Activated CD8-positive, alpha-beta T cell treated with anti-CD3 and anti-CD28 coated beads, Interleukin-2, amount 10 ng/mL, durations not matched to agents 7 days and 5 days (primary cell): ENCODE measurements at regions of chr3 and their contacts with region 1.

Region 1: GRCh38 chr3:195458316-195458717 is 15.5 kb upstream of the ACAP2 start:
- DNase-seq: no peak
- ATAC-seq: peak; percentile 95
- H3K4me3 Mint-ChIP-seq: peak overlapping the region; percentile 33
- H3K27ac Mint-ChIP-seq: peak overlapping the region; percentile 86
- H3K4me1 Mint-ChIP-seq: peaks cover 20% of the 10 kb centered on the region
- H3K27me3 Mint-ChIP-seq: no peaks in the 10 kb centered on the region

Region 2: DNA sequence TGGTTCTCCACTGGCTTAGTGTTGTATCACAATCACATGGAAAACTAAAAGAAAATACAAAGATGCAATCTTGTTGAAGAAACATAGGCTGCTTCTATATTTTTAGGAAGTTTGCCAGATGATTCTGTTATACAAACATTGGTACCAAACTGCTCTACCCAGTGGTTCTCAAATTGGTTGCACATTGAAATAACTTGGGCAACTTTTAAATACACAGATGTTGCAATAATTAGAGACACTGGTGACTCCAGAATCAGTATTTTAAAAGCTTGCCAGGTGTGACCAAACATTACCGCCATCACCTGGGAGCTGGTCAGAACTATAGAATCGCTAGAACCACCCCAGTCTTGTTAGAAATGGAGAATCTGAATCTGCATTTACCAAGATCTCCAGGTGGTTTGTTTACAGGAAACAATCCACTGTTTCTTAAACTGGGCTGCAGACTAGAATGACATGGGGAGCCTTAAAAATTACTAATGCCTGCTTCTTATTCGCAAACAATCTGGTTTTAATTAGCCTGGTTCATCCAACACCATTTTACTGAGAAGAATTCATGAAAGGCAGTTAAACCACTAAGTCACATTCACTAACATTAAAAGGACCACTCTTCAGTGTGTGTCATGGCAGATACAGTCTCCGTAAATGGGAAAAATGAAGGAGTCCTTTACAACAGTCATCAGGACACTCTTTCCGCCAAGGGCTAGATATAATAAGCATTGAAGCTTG is 92.0 kb before region 1 on chr3:
- CTCF ChIA-PET with region 1: no interaction called
- POLR2A ChIA-PET with region 1: no interaction called
- DNase-seq: no peak
- ATAC-seq: no peak
- H3K4me3 Mint-ChIP-seq: no peak overlapping the region
- H3K27ac Mint-ChIP-seq: no peak overlapping the region
- H3K4me1 Mint-ChIP-seq: no peaks in the 10 kb centered on the region
- H3K27me3 Mint-ChIP-seq: no peaks in the 10 kb centered on the region

Region 3: DNA sequence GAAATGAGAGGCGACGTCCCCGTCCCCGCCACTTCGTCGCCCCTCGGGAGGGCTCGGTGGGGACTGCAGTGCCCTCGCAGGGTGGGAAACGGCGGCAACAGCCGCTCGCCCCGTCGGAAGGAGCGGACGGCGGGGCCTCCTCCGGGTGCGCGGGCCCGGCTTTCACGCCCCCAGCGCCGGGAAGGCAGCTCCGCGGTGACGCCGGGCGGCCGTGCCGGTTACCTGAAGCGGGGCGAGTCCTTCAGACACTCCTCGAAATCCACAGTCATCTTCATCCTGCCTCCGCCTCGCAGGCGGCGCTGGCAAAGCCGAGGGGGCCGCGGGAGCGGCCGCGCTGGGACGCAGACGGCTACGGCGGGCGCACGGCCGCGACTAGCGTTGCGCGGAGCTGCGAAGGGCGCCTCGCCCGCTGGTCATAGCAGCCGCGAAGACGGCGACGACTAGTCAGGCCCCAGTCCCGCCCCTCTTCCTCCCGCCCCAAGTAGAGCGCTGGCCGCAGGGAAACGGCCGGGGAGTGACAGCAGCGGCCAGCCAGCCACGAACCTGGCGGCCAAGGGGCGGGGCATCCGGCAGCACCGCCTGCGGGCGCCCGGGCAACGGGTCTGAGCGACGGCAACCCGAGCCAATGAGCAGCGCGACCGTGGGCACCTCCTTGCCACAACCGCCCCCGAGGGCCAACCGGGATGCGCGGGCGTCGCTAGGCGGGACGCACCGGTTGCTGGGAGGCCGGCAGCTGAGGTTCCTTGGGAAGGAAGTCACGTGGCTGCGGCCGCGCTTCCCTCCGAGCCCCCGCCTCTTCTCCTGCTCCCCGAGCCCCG is 15.5 kb before region 1 on chr3 and contains the start of gene ACAP2:
- CTCF ChIA-PET with region 1: interaction called, 4 read pairs
- POLR2A ChIA-PET with region 1: interaction called, 14 read pairs
- DNase-seq: peak; percentile 99
- ATAC-seq: peak; percentile 92
- H3K4me3 Mint-ChIP-seq: peak within 1 kb of the TSS; percentile 94
- H3K27ac Mint-ChIP-seq: peak within 1 kb of the TSS; percentile 92
- H3K4me1 Mint-ChIP-seq: peaks cover 45% of the 10 kb centered on the region
- H3K27me3 Mint-ChIP-seq: no peaks in the 10 kb centered on the region
- total RNA-seq, gene ACAP2: 69.7 to 74.2 TPM